Activated B cell treated with CpG ODN at 0.5 μM for 24 hours (primary cell): ENCODE measurements at regions of chr12 and their contacts with region 1.

Region 1: DNA sequence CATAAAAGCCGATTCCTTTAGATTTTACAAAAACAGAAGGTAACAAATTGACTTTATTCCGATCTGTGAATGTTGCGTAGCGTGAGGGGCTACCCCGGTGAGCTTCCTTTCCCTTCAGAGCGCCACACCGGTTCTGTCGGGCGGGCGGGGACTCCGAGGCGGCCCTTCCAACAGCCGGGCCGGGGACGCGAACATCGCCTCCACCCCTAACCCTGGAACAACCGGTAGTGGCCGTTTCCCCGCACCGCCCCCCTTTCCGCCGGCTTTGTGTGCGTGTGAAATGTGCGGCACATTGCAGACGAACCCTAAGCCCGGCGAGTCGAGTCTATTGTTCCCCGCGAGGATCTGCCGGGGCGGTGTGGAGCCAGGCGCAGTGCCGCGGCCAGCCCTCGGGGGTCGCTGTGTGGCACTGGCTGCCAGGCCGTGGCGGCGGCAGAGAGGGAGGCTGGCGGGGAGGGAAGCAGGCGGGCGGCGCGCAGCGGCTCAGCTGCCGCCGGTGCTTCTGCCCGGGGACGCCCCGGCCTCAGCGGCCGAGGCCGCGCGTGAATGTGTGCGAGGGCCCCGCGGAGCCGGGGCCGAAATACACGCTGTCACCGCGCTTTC is 775 bp upstream of the ARID2 start:
- DNase-seq: peak; percentile 97
- ATAC-seq: peak; percentile 68
- H3K4me3 Mint-ChIP-seq: peak overlapping the region; percentile 92
- H3K27ac Mint-ChIP-seq: peak overlapping the region; percentile 99
- H3K4me1 Mint-ChIP-seq: peaks cover 41% of the 10 kb centered on the region
- H3K27me3 Mint-ChIP-seq: no peaks in the 10 kb centered on the region
- CTCF ChIP-seq: peak; percentile 60

Region 2: GRCh38 chr12:45170456-45171042 is 558.2 kb before region 1 on chr12:
- CTCF ChIA-PET with region 1: interaction called, 7 read pairs
- POLR2A ChIA-PET with region 1: no interaction called
- intact Hi-C with region 1: loop called (anchors 1 kb)
- DNase-seq: peak; percentile 49
- ATAC-seq: no peak
- H3K4me3 Mint-ChIP-seq: no peak overlapping the region
- H3K27ac Mint-ChIP-seq: no peak overlapping the region
- H3K4me1 Mint-ChIP-seq: no peaks in the 10 kb centered on the region
- H3K27me3 Mint-ChIP-seq: no peaks in the 10 kb centered on the region
- CTCF ChIP-seq: peak; percentile 73

Region 3: DNA sequence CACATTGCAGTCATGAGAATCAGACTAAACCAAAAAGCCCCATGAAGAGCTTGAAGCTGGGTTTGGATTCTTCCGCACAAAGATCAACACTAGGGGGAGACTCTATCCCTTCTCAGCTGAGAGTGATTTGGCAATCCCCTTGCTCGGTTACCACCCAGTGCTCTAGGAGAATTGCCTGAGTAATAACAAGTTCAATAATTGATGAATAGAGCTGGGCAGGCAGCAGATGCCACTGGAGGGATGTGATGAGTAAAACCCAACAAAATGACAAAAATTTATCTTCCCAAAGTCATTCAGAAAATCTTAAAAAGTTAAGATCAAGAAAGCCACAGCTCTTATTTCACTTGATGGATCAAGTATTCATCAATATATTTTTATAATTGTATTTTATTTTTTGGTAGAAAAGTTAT is 184.8 kb before region 1 on chr12:
- CTCF ChIA-PET with region 1: interaction called, 77 read pairs
- POLR2A ChIA-PET with region 1: interaction called, 45 read pairs
- intact Hi-C with region 1: loop called (anchors 1 kb)
- DNase-seq: no peak
- ATAC-seq: peak; percentile 89
- H3K4me3 Mint-ChIP-seq: no peak overlapping the region
- H3K27ac Mint-ChIP-seq: no peak overlapping the region
- H3K4me1 Mint-ChIP-seq: peaks cover 4% of the 10 kb centered on the region
- H3K27me3 Mint-ChIP-seq: no peaks in the 10 kb centered on the region
- CTCF ChIP-seq: no peak

Region 4: DNA sequence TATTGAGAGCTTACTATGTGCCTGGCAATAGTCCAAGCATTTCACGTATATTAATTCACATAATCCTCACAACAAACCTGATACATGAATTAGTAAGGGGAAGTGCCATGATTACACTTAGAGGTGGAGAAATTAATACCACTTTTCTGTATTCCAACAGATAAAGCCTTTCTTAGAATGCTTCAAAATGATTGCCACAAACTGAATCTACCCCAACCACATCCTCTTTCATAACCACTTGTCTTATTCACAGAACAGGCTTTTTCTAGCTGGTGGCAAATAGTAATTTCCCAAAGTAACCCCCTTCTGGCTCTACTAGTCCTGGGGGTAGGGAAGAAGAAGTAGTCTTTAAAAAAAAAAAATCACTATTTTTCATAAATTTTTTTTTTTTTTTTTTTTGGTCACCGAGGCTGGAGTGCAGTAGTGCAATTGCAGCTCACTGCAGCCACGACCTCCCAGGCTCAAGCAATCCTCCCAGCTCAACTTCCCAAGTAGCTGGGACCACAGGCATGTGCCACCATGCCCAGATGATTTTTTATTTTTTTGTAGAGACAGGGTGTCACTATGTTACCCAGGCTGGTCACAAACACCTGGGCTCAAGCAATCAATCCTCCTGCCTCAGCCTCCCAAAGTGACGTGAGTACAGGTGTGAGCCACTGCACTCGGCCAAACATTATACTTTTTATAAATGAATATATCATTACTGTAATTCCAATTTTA is 58.2 kb before region 1 on chr12:
- CTCF ChIA-PET with region 1: interaction called, 5 read pairs
- POLR2A ChIA-PET with region 1: interaction called, 49 read pairs
- intact Hi-C with region 1: loop called (anchors 1 kb)
- DNase-seq: no peak
- ATAC-seq: peak; percentile 59
- H3K4me3 Mint-ChIP-seq: no peak overlapping the region
- H3K27ac Mint-ChIP-seq: peak overlapping the region; percentile 13
- H3K4me1 Mint-ChIP-seq: peaks cover 27% of the 10 kb centered on the region
- H3K27me3 Mint-ChIP-seq: no peaks in the 10 kb centered on the region
- CTCF ChIP-seq: no peak

Region 5: DNA sequence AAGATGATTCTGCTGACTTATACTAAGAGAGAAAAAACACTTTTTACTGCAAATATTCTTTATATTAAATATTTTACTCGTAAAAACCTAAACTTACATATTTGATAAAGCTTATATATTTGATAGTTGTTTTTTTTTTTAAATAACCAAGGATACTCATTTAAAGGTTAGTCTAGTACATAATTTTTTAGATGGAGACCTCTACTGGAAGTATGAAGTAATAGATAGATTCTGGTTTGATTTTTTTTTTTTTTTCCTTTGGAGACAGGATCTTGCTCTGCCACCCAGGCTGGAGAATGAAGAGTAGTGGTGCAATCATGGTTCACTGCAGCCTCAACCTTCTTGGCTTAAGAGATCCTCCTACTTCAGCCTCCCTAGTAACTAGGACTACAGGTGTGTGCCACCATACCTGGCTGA is 17.1 kb after region 1 on chr12:
- CTCF ChIA-PET with region 1: interaction called, 38 read pairs
- POLR2A ChIA-PET with region 1: interaction called, 23 read pairs
- intact Hi-C with region 1: loop called (anchors 1 kb)
- DNase-seq: no peak
- ATAC-seq: peak; percentile 52
- H3K4me3 Mint-ChIP-seq: no peak overlapping the region
- H3K27ac Mint-ChIP-seq: no peak overlapping the region
- H3K4me1 Mint-ChIP-seq: peaks cover 16% of the 10 kb centered on the region
- H3K27me3 Mint-ChIP-seq: no peaks in the 10 kb centered on the region
- CTCF ChIP-seq: no peak

Region 6: GRCh38 chr12:46209914-46210872 is 481.5 kb after region 1 on chr12:
- CTCF ChIA-PET with region 1: no interaction called
- POLR2A ChIA-PET with region 1: no interaction called
- intact Hi-C with region 1: loop called (anchors 10 kb)
- DNase-seq: peak; percentile 47
- ATAC-seq: peak; percentile 70
- H3K4me3 Mint-ChIP-seq: peak overlapping the region; percentile 63
- H3K27ac Mint-ChIP-seq: peak overlapping the region; percentile 93
- H3K4me1 Mint-ChIP-seq: peaks cover 94% of the 10 kb centered on the region
- H3K27me3 Mint-ChIP-seq: no peaks in the 10 kb centered on the region
- CTCF ChIP-seq: no peak